ENCODE measurements at regions of chr14 and their contacts with region 1.

Region 1: GRCh38 chr14:98138666-98139065 is 1133.3 kb downstream of the BCL11B start:
- DNase-seq: peak; percentile 59
- ATAC-seq: peak; percentile 55
- H3K4me3 Mint-ChIP-seq: peak overlapping the region; percentile 79
- H3K27ac Mint-ChIP-seq: peak overlapping the region; percentile 94
- H3K4me1 Mint-ChIP-seq: peaks cover 68% of the 10 kb centered on the region
- H3K27me3 Mint-ChIP-seq: no peaks in the 10 kb centered on the region

Region 2: GRCh38 chr14:98093087-98093486 is 45.6 kb before region 1 on chr14:
- POLR2A ChIA-PET with region 1: no interaction called
- DNase-seq: no peak
- ATAC-seq: no peak
- H3K4me3 Mint-ChIP-seq: no peak overlapping the region
- H3K27ac Mint-ChIP-seq: no peak overlapping the region
- H3K4me1 Mint-ChIP-seq: peaks cover 9% of the 10 kb centered on the region
- H3K27me3 Mint-ChIP-seq: peaks cover 2% of the 10 kb centered on the region

Region 3: DNA sequence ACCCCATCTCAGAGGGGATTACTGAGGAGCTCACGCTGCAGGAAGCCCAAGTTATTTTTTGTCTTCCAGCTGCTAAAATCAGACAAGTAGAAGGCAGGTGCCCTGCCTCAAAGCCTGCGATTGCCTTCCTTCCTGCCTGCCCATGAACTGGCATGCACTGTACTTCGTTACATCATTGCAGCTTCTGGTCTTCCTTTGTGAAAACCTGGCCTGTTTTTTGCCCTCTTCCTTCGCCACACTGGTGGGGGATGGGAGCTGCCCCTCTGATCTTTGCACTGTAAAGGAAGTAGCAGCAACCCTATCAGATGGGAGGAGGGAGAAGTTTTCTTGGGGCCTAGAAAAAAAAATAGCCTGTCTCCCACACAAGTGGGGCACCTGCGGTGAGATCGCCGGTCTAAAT is 34.6 kb after region 1 on chr14:
- POLR2A ChIA-PET with region 1: interaction called, 11 read pairs
- DNase-seq: peak; percentile 64
- ATAC-seq: peak; percentile 48
- H3K4me3 Mint-ChIP-seq: peak overlapping the region; percentile 69
- H3K27ac Mint-ChIP-seq: peak overlapping the region; percentile 93
- H3K4me1 Mint-ChIP-seq: peaks cover 89% of the 10 kb centered on the region
- H3K27me3 Mint-ChIP-seq: no peaks in the 10 kb centered on the region

Region 4: GRCh38 chr14:98182393-98183055 is 43.9 kb after region 1 on chr14:
- POLR2A ChIA-PET with region 1: interaction called, 101 read pairs
- DNase-seq: no peak
- ATAC-seq: peak; percentile 34
- H3K4me3 Mint-ChIP-seq: peak overlapping the region; percentile 59
- H3K27ac Mint-ChIP-seq: peak overlapping the region; percentile 90
- H3K4me1 Mint-ChIP-seq: peaks cover 79% of the 10 kb centered on the region
- H3K27me3 Mint-ChIP-seq: no peaks in the 10 kb centered on the region

Region 5: GRCh38 chr14:99271951-99272631 is 1133.4 kb after region 1 on chr14 and contains the start of gene BCL11B:
- POLR2A ChIA-PET with region 1: interaction called, 66 read pairs
- DNase-seq: peak; percentile 87
- ATAC-seq: peak; percentile 77
- H3K4me3 Mint-ChIP-seq: peak within 1 kb of the TSS; percentile 98
- H3K27ac Mint-ChIP-seq: peak within 1 kb of the TSS; percentile 99
- H3K4me1 Mint-ChIP-seq: peaks cover 26% of the 10 kb centered on the region
- H3K27me3 Mint-ChIP-seq: peaks cover 16% of the 10 kb centered on the region
- total RNA-seq, gene BCL11B: 99.5 to 104 TPM